Naive thymus-derived CD4-positive, alpha-beta T cell (primary cell): ENCODE measurements at regions of chr4 and their contacts with region 1.

Region 1: GRCh38 chr4:39458505-39459300 is at the starts of genes LIAS and RPL9:
- DNase-seq: peak; percentile 80 to 96 (median 92)
- ATAC-seq: peak; percentile 93
- H3K4me3 ChIP-seq: peak within 1 kb of the TSS; percentile 85
- H3K4me3 Mint-ChIP-seq: peak within 1 kb of the TSS; percentile 92 to 99 (median 96)
- H3K27ac ChIP-seq: peak within 1 kb of the TSS; percentile 95
- H3K27ac Mint-ChIP-seq: peak within 1 kb of the TSS; percentile 98 to 100 (median 99)
- H3K4me1 ChIP-seq: peaks cover 17 to 19% of the 10 kb centered on the region in 2 donors
- H3K4me1 Mint-ChIP-seq: peaks cover 8 to 60% (median 47%) of the 10 kb centered on the region in 7 donors
- H3K27me3 ChIP-seq: no peaks in the 10 kb centered on the region
- H3K27me3 Mint-ChIP-seq: peaks cover 0 to 2% (median 0%) of the 10 kb centered on the region in 5 donors
- total RNA-seq, gene LIAS: 14.5 to 27.8 (median 16.4) TPM
- total RNA-seq, gene RPL9: 1,414 to 3,398 (median 2,567) TPM

Region 2: GRCh38 chr4:39032218-39033085 is 426.3 kb before region 1 on chr4 and contains the start of gene TMEM156:
- CTCF ChIA-PET with region 1: no interaction called
- POLR2A ChIA-PET with region 1: no interaction called
- intact Hi-C with region 1: loop called in 1 of 2 experiments (anchors 5 kb)
- DNase-seq: peak in 7 of 9 donors; percentile 59 to 77 (median 70)
- ATAC-seq: peak; percentile 93
- H3K4me3 ChIP-seq: peak within 1 kb of the TSS; percentile 61
- H3K4me3 Mint-ChIP-seq: peak within 1 kb of the TSS; percentile 65 to 89 (median 82)
- H3K27ac ChIP-seq: peak within 1 kb of the TSS; percentile 55
- H3K27ac Mint-ChIP-seq: peak within 1 kb of the TSS; percentile 19 to 93 (median 87)
- H3K4me1 ChIP-seq: peaks cover 29 to 45% of the 10 kb centered on the region in 2 donors
- H3K4me1 Mint-ChIP-seq: peaks cover 16 to 55% (median 44%) of the 10 kb centered on the region in 7 donors
- H3K27me3 ChIP-seq: no peaks in the 10 kb centered on the region
- H3K27me3 Mint-ChIP-seq: no peaks in the 10 kb centered on the region
- total RNA-seq, gene TMEM156: 8.6 to 36.4 (median 9.4) TPM

Region 3: DNA sequence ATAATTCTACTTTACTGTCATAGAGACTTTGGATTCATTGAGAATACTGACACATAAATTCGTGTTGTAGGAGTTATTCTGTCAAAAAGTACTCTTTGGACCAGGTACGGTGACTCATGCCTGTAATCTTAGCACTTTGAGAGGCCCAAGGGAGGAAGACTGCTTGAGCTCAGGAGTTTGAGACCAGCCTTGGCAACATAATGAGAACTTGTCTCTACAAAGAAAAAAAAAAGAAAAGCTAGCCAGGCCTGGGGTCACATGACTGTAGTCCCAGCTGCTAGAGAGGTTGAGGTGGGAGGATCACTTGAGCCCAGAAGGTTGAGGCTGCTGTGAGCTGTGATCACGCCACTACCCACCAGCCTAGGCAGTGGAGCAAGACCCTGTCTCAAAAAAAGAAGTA is 221.5 kb before region 1 on chr4:
- CTCF ChIA-PET with region 1: no interaction called
- POLR2A ChIA-PET with region 1: no interaction called
- intact Hi-C with region 1: no loop called
- DNase-seq: no peak
- ATAC-seq: no peak
- H3K4me3 ChIP-seq: no peak overlapping the region
- H3K4me3 Mint-ChIP-seq: no peak overlapping the region
- H3K27ac ChIP-seq: no peak overlapping the region
- H3K27ac Mint-ChIP-seq: no peak overlapping the region
- H3K4me1 ChIP-seq: no peaks in the 10 kb centered on the region
- H3K4me1 Mint-ChIP-seq: peaks cover 0 to 2% (median 0%) of the 10 kb centered on the region in 7 donors
- H3K27me3 ChIP-seq: no peaks in the 10 kb centered on the region
- H3K27me3 Mint-ChIP-seq: no peaks in the 10 kb centered on the region

Region 4: GRCh38 chr4:39365830-39366771 is 92.6 kb before region 1 on chr4 and contains the start of gene RFC1:
- CTCF ChIA-PET with region 1: no interaction called
- POLR2A ChIA-PET with region 1: interaction called, 29 read pairs
- intact Hi-C with region 1: loop called (anchors 1 kb)
- DNase-seq: peak; percentile 84 to 92 (median 91)
- ATAC-seq: peak; percentile 98
- H3K4me3 ChIP-seq: peak within 1 kb of the TSS; percentile 69
- H3K4me3 Mint-ChIP-seq: peak within 1 kb of the TSS; percentile 88 to 98 (median 94)
- H3K27ac ChIP-seq: peak within 1 kb of the TSS; percentile 84
- H3K27ac Mint-ChIP-seq: peak within 1 kb of the TSS; percentile 72 to 97 (median 92)
- H3K4me1 ChIP-seq: peaks cover 12 to 19% of the 10 kb centered on the region in 2 donors
- H3K4me1 Mint-ChIP-seq: peaks cover 33 to 59% (median 41%) of the 10 kb centered on the region in 7 donors
- H3K27me3 ChIP-seq: no peaks in the 10 kb centered on the region
- H3K27me3 Mint-ChIP-seq: no peaks in the 10 kb centered on the region
- total RNA-seq, gene RFC1: 62.4 to 66.4 (median 64.3) TPM

Region 5: GRCh38 chr4:39446751-39447573 is 11.7 kb before region 1 on chr4:
- CTCF ChIA-PET with region 1: interaction called, 3 read pairs
- POLR2A ChIA-PET with region 1: interaction called, 8 read pairs
- intact Hi-C with region 1: loop called in 1 of 2 experiments (anchors 1 kb)
- DNase-seq: peak in 6 of 9 donors; percentile 25 to 51 (median 40)
- ATAC-seq: peak; percentile 90
- H3K4me3 ChIP-seq: peak overlapping the region; percentile 26
- H3K4me3 Mint-ChIP-seq: peak overlapping the region; percentile 48 to 81 (median 70)
- H3K27ac ChIP-seq: no peak overlapping the region
- H3K27ac Mint-ChIP-seq: peak overlapping the region in 3 of 9 donors; percentile 6 to 65 (median 38)
- H3K4me1 ChIP-seq: peaks cover 0 to 3% of the 10 kb centered on the region in 2 donors
- H3K4me1 Mint-ChIP-seq: peaks cover 0 to 11% (median 6%) of the 10 kb centered on the region in 7 donors
- H3K27me3 ChIP-seq: no peaks in the 10 kb centered on the region
- H3K27me3 Mint-ChIP-seq: no peaks in the 10 kb centered on the region

Region 6: GRCh38 chr4:39469429-39470077 is 10.8 kb after region 1 on chr4:
- CTCF ChIA-PET with region 1: interaction called, 7 read pairs
- POLR2A ChIA-PET with region 1: interaction called, 21 read pairs
- intact Hi-C with region 1: no loop called
- DNase-seq: peak in 7 of 9 donors; percentile 36 to 60 (median 47)
- ATAC-seq: peak; percentile 98
- H3K4me3 ChIP-seq: no peak overlapping the region
- H3K4me3 Mint-ChIP-seq: no peak overlapping the region
- H3K27ac ChIP-seq: no peak overlapping the region
- H3K27ac Mint-ChIP-seq: peak overlapping the region in 6 of 9 donors; percentile 24 to 62 (median 44)
- H3K4me1 ChIP-seq: no peaks in the 10 kb centered on the region
- H3K4me1 Mint-ChIP-seq: peaks cover 0 to 15% (median 4%) of the 10 kb centered on the region in 7 donors
- H3K27me3 ChIP-seq: no peaks in the 10 kb centered on the region
- H3K27me3 Mint-ChIP-seq: no peaks in the 10 kb centered on the region

Region 7: DNA sequence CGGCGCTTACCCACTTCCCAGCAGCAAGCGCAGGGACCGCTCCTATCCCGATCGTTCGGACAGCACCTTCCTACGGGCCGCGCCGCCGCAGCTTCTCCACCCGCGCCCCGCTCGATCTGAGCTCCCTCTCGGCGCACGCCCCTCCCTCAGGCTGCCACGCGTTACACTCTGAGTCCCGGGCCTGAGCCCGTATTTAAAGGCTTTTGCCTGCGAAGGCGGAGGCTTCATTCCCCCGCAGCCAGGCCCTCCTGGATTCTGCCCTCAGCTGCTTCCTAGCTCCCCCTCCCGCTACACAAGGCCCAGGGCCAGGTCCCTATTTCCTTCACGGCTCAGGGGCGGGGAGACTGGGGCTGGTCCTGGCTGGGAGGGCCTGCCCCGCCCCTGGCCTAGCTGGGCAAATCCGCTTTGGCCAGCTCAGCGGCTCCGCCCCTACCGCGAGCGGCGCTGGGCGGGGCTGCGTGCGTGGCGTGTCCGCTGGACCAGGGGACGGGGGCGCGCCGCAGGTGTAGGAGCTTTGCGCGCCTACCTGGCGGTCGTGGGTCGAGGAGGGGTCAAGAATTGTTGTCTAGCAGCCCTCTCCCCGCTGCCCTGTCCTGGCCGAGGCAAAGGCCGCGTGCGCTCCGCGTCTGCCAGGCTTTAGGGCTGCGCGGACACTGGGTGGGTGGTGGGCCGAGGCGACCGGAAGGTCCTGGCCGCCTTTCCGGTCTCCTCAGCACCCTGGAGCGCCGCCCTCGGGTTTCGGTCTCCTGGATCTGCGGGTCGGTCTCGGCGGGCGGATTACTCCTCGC is 68.8 kb after region 1 on chr4 and contains the start of gene UGDH:
- CTCF ChIA-PET with region 1: no interaction called
- POLR2A ChIA-PET with region 1: interaction called, 11 read pairs
- intact Hi-C with region 1: loop called (anchors 1 kb)
- DNase-seq: peak; percentile 85 to 95 (median 88)
- ATAC-seq: peak; percentile 99
- H3K4me3 ChIP-seq: peak within 1 kb of the TSS; percentile 81
- H3K4me3 Mint-ChIP-seq: peak within 1 kb of the TSS; percentile 88 to 99 (median 98)
- H3K27ac ChIP-seq: peak within 1 kb of the TSS; percentile 74
- H3K27ac Mint-ChIP-seq: peak within 1 kb of the TSS; percentile 84 to 97 (median 93)
- H3K4me1 ChIP-seq: peaks cover 7 to 10% of the 10 kb centered on the region in 2 donors
- H3K4me1 Mint-ChIP-seq: peaks cover 11 to 26% (median 19%) of the 10 kb centered on the region in 7 donors
- H3K27me3 ChIP-seq: no peaks in the 10 kb centered on the region
- H3K27me3 Mint-ChIP-seq: no peaks in the 10 kb centered on the region
- total RNA-seq, gene UGDH: 6.9 to 20.9 (median 17.7) TPM

Region 8: GRCh38 chr4:39638354-39639240 is 179.9 kb after region 1 on chr4 and contains the start of gene SMIM14:
- CTCF ChIA-PET with region 1: no interaction called
- POLR2A ChIA-PET with region 1: interaction called, 4 read pairs
- intact Hi-C with region 1: loop called (anchors 1 kb)
- DNase-seq: peak; percentile 69 to 96 (median 82)
- ATAC-seq: peak; percentile 92
- H3K4me3 ChIP-seq: peak within 1 kb of the TSS; percentile 77
- H3K4me3 Mint-ChIP-seq: peak within 1 kb of the TSS; percentile 86 to 97 (median 94)
- H3K27ac ChIP-seq: peak within 1 kb of the TSS; percentile 79
- H3K27ac Mint-ChIP-seq: peak within 1 kb of the TSS; percentile 67 to 96 (median 86)
- H3K4me1 ChIP-seq: peaks cover 12 to 13% of the 10 kb centered on the region in 2 donors
- H3K4me1 Mint-ChIP-seq: peaks cover 22 to 51% (median 44%) of the 10 kb centered on the region in 7 donors
- H3K27me3 ChIP-seq: no peaks in the 10 kb centered on the region
- H3K27me3 Mint-ChIP-seq: peaks cover 0 to 27% (median 0%) of the 10 kb centered on the region in 5 donors
- total RNA-seq, gene SMIM14: 4.6 to 15.1 (median 12.9) TPM